Activated CD8-positive, alpha-beta memory T cell treated with anti-CD3 and anti-CD28 coated beads, Interleukin-2, amount 10 ng/mL, durations not matched to agents 7 days and 5 days (primary cell): ENCODE measurements at regions of chr3 and their contacts with region 1.

Region 1: DNA sequence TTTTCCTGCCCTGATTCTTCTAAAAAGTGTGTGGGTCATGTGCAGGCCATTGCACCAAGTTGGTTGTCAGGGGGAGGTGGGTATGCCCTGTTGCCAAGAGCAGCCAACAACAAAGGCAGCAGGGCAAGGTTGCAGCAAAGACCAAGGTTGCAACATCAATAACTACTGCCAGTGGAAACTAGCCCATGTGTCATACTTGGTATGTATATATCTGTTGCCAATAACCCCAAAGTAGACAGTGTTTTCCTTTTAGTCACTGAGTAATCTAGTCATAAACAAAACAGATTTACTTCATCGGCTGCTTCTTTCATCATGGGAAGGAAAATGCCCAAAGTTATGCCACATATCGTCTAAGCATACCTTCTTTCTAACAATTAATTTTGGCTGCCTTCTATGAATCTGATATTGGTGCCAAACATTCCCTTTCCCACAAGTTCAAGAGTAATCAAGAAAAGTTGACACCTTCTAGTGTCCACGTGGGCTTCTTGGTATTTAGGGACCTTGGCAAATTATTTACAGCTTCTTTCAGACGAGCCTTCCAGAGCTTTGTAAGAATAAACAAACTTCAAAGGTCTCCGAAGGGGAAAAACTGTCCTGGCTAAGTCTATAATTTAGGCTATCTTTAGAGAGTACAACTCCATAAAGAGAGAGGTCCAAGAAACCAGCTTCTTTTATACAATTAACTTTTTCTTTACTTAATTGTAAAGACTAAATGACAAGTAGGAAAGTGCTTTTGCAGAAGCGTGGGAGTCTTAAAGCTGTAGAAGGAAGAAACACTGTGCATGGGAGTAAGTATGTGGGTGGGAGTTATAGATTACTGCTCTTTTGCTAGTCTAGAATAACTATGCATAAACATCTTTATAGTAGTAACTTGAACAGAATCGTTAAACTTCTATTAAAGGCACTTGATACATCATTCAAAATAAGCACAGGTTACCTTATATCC is 10.0 kb upstream of the MBNL1 start:
- DNase-seq: peak; percentile 83
- ATAC-seq: peak; percentile 69
- H3K4me3 Mint-ChIP-seq: peak overlapping the region; percentile 66
- H3K27ac Mint-ChIP-seq: peak overlapping the region; percentile 94
- H3K4me1 Mint-ChIP-seq: peaks cover 82% of the 10 kb centered on the region
- H3K27me3 Mint-ChIP-seq: no peaks in the 10 kb centered on the region

Region 2: DNA sequence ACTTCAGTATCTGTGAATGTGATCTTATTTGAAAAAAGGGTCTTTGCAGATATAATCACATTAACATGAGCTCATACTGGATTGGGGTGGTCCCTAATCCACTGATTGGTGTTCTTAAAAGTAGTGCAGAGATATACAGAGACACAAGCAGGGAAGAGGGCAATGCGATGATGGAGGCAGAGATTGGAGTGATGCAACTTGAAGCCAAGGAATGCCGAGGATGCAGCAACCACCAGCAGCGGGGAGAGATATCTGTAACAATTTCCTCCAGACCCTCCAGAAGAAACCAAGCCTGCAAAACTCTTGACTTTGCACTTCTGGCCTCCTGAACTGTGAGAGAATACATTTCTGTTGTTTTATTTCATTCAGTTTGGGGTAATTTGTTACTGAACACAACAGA is 161.0 kb before region 1 on chr3:
- CTCF ChIA-PET with region 1: no interaction called
- DNase-seq: no peak
- ATAC-seq: no peak
- H3K4me3 Mint-ChIP-seq: no peak overlapping the region
- H3K27ac Mint-ChIP-seq: no peak overlapping the region
- H3K4me1 Mint-ChIP-seq: peaks cover 7% of the 10 kb centered on the region
- H3K27me3 Mint-ChIP-seq: peaks cover 3% of the 10 kb centered on the region

Region 3: GRCh38 chr3:152243721-152244516 is 14.8 kb before region 1 on chr3:
- CTCF ChIA-PET with region 1: interaction called, 22 read pairs
- DNase-seq: peak; percentile 61
- ATAC-seq: peak; percentile 48
- H3K4me3 Mint-ChIP-seq: peak overlapping the region; percentile 83
- H3K27ac Mint-ChIP-seq: peak overlapping the region; percentile 93
- H3K4me1 Mint-ChIP-seq: peaks cover 48% of the 10 kb centered on the region
- H3K27me3 Mint-ChIP-seq: no peaks in the 10 kb centered on the region

Region 4: DNA sequence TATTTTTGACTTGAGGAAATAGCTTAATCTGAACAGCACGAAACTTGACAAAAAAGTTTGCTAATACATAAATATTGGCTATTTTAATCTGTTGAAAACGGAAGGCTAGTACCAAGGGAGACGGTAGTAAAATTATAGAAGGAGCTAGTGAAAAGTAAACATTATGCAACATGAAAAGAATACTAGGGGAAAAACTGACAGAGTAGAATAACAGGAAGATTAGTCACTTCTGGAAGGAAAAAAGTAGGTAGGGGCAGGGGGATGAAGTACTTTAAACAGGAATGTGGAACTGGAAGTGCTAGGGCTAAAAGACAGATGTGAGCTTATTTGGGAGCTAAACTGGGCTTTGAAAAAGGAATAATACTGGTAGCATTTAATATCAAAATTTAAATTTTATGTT is 70.1 kb after region 1 on chr3:
- CTCF ChIA-PET with region 1: no interaction called
- DNase-seq: no peak
- ATAC-seq: no peak
- H3K4me3 Mint-ChIP-seq: no peak overlapping the region
- H3K27ac Mint-ChIP-seq: no peak overlapping the region
- H3K4me1 Mint-ChIP-seq: peaks cover 67% of the 10 kb centered on the region
- H3K27me3 Mint-ChIP-seq: no peaks in the 10 kb centered on the region